Tibial artery (tissue), 4 donors: ENCODE measurements at regions of chr16 and their contacts with region 1.

Region 1: GRCh38 chr16:85610508-85611332 is 2.4 kb upstream of the GSE1 start:
- DNase-seq: peak; percentile 91 to 92
- H3K4me3 ChIP-seq: peak overlapping the region; percentile 65 to 85
- H3K27ac ChIP-seq: peak overlapping the region; percentile 96 to 98
- H3K4me1 ChIP-seq: peaks cover 5 to 75% (median 45%) of the 10 kb centered on the region in 4 donors
- H3K27me3 ChIP-seq: no peaks in the 10 kb centered on the region
- CTCF ChIP-seq: peak; percentile 99

Region 2: DNA sequence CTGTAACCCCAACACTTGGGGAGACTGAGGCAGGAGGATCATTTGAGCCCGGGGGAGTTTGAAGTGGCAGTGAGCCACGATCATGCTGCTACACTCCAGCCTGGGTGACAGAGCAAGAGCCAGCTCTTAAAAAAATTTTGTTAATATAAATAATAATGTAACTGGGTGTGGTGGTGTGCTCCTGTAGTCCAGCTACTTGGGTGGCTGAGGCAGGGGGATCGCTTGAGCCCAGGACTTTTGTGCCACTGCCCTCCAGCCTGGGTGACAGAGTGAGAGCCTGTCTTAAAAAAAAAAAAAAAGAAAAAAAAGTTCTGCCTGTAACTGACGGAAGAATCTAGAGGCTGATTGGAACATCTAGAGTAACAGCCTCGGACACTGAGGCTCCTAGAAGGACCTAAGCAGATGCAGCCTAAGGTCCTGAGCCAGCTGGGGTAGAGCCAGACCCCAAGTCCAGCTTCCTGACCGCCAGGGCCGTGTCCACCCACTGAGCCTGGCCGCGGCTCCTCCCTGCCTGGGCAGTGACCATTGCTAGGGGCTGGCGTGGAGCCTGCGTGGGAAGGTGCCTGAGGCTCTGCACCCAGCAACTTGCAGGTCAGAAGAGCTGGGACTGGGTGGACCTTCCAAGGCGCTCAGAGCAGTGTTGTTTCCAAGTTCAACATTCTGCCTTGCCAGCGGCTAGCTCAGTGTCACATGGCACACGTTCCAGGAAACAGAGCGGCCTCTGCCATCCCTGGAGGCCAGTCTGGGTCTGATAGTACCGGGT is 289.0 kb before region 1 on chr16:
- intact Hi-C with region 1: loop called (anchors 5 kb)
- DNase-seq: peak; percentile 98 to 100
- H3K4me3 ChIP-seq: peak overlapping the region in 1 of 2 donors; percentile 17
- H3K27ac ChIP-seq: peak overlapping the region; percentile 83 to 89
- H3K4me1 ChIP-seq: peaks cover 13 to 44% (median 39%) of the 10 kb centered on the region in 4 donors
- H3K27me3 ChIP-seq: peaks cover 0 to under 1% of the 10 kb centered on the region in 2 donors
- CTCF ChIP-seq: peak in 1 of 2 experiments; percentile 14

Region 3: DNA sequence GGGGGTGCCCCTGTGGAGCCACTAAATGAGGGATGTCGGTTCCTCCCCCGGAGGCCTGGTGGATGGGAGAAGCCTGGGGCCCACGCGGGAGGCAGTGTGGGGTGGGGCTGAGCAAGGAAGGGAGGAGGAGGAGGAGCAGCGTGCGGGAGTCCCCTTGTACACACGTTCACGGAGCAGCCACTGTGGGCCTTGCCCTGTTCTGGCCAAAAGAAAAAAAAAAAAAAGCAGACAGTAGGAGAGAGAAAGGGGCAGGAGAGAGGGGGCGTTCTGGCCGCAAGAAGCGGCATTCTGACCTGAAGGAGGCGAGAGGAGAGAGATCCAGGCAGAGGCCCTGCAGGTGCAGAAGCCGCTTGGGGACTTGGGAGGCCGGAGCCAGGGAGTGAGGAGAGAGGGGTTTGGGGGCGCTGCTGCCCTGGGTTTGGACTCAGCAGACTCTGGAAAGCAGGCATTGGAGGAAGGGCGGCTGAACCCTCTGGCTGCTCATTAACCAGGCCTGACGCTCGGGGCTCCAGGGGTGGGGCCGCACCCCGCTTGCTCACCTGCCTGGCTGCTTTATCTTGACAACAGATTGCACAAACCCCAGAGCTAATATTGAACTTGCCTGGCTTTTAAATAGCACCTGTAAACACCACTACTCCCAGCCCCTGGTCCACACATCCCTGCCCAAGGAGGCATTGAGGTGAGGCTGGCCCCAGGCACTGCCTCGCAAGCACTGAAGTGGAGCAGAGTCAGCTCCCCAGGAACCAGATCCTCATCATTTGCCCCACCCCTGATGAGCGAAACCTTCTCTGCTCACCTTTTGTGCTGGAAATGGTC is 188.1 kb before region 1 on chr16:
- intact Hi-C with region 1: loop called (anchors 2 kb)
- DNase-seq: peak in 1 of 2 donors; percentile 17
- H3K4me3 ChIP-seq: no peak overlapping the region
- H3K27ac ChIP-seq: no peak overlapping the region
- H3K4me1 ChIP-seq: peaks cover 0 to 6% (median 0%) of the 10 kb centered on the region in 4 donors
- H3K27me3 ChIP-seq: no peaks in the 10 kb centered on the region
- CTCF ChIP-seq: no peak

Region 4: GRCh38 chr16:85514595-85515318 is 96.0 kb before region 1 on chr16:
- intact Hi-C with region 1: loop called (anchors 1 kb)
- DNase-seq: peak; percentile 84 to 95
- H3K4me3 ChIP-seq: peak overlapping the region; percentile 1 to 15
- H3K27ac ChIP-seq: peak overlapping the region; percentile 73 to 81
- H3K4me1 ChIP-seq: peaks cover 7 to 36% (median 30%) of the 10 kb centered on the region in 4 donors
- H3K27me3 ChIP-seq: no peaks in the 10 kb centered on the region
- CTCF ChIP-seq: peak in 1 of 2 experiments; percentile 10

Region 5: GRCh38 chr16:85569615-85570212 is 41.0 kb before region 1 on chr16:
- intact Hi-C with region 1: loop called (anchors 5 kb)
- DNase-seq: no peak
- H3K4me3 ChIP-seq: no peak overlapping the region
- H3K27ac ChIP-seq: peak overlapping the region in 1 of 2 donors; percentile 0
- H3K4me1 ChIP-seq: peaks cover 0 to 47% (median 27%) of the 10 kb centered on the region in 4 donors
- H3K27me3 ChIP-seq: no peaks in the 10 kb centered on the region
- CTCF ChIP-seq: no peak